Activated B cell treated with CpG ODN at 0.5 μM for 24 hours (primary cell): ENCODE measurements at regions of chr19 and their contacts with region 1.

Region 1: DNA sequence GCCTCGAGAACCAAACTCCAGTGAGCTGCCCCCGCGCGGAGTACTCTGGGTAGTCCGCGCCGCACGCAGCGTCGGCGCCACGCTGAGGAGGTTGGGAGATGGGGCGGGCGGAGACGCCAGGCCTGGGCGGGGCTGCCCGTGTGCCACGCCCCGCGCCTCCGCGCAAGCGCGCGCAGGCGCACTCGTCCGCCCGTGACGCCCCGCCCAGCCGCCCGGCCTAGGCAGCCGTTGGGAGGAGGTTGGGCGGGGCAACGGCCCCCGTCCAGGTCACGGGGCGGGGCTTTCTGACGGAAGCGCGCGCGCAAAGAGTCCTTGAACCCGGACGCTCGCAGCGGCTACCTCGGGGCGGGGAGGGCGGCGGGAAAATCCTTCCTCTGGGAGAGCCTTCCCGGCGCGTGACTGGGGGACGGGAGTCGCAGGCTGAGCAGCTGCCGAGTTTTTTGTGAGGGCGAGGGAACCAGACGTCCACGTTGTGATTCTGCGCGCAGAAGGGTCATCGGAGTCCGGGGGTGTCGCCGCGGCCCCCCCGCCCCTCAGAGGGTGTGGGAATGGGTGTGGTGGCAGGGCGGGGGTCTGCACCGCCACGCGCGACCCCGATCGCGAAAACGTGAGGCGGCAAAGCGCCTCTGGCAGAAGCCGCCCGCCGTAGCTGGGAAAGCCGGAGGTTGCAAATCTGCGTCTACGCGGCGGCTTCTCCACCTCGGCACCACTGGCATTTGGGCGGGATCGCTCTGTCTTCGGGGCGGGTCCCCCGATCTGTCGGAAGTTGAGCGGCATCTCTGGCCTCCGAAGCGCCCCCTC is at the start of gene MED26:
- DNase-seq: peak; percentile 93
- ATAC-seq: peak; percentile 94
- H3K4me3 Mint-ChIP-seq: peak within 1 kb of the TSS; percentile 98
- H3K27ac Mint-ChIP-seq: peak within 1 kb of the TSS; percentile 94
- H3K4me1 Mint-ChIP-seq: peaks cover 51% of the 10 kb centered on the region
- H3K27me3 Mint-ChIP-seq: no peaks in the 10 kb centered on the region
- CTCF ChIP-seq: no peak
- total RNA-seq, gene MED26: 32.0 and 36.1 TPM in 2 replicates

Region 2: DNA sequence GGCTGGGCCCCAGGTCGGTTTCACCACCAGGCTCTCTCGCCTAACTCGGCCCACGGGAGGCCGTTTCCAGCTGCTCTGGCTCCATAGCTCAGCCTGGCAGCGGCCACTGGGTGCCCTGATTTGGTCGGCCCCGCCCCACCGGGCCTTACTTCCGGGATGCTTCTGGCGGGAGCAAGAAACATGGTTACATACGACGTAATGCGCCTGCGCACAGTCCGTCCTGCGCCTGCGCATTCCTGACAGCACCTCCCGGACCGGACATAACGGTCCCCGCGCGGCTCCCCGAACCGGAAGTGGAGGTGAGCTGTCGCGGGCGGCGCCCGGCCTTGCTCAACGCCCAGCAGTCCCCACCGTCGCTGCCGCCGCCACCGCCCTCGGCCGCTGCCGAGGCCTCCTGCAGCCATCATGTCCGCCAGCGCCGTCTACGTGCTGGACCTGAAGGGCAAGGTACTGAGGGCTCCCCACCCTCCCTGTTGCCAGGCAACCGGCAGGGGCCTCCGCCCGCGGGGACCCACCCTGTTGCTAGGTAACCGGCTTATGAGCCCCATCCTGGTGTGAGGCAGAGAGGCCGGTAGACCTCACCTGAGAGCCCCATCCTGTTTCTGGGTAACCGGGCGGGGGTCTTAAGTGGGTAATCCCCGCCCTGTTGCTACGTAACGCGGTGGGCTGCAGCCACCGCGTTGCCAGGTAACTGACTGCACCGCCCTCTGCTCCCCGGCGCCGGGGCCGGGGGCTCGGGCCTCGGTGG is 430.6 kb before region 1 on chr19 and contains the start of gene AP1M1:
- CTCF ChIA-PET with region 1: no interaction called
- POLR2A ChIA-PET with region 1: no interaction called
- intact Hi-C with region 1: loop called (anchors 1 kb)
- DNase-seq: peak; percentile 99
- ATAC-seq: peak; percentile 88
- H3K4me3 Mint-ChIP-seq: peak within 1 kb of the TSS; percentile 83
- H3K27ac Mint-ChIP-seq: peak within 1 kb of the TSS; percentile 97
- H3K4me1 Mint-ChIP-seq: peaks cover 39% of the 10 kb centered on the region
- H3K27me3 Mint-ChIP-seq: no peaks in the 10 kb centered on the region
- CTCF ChIP-seq: no peak
- total RNA-seq, gene AP1M1: 82.6 and 87.5 TPM in 2 replicates

Region 3: DNA sequence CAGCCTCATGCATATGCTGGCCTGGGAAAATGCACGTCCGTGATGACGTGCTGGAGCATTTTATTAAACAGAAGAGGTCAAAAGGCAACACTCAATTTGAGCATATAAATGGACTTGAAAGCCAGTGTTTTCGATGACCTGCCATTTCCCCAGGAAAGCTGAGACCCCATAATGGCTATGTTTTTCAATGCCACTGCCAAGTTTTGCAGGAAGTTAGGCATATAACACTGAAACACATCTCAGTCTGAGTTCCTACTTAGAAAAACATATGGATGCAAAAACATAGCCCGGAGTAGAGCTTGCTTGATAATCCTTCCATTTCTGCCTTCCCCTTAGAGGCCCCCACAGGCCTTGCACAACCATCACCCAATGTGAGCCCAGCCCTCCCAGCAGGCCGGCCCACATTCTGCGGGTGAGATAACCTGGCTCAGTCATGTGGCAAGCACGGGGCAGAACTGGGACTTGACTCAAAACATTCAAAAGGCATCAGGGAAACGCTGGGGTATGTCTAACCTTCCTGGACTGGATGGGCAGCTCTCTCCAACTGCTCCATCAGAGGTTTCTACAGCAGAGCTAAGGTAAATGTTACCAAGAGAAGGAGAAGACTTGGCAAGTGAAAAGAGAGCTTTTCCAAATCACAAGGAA is 181.5 kb before region 1 on chr19:
- CTCF ChIA-PET with region 1: no interaction called
- POLR2A ChIA-PET with region 1: interaction called, 3 read pairs
- intact Hi-C with region 1: loop called (anchors 5 kb)
- DNase-seq: peak; percentile 52
- ATAC-seq: peak; percentile 43
- H3K4me3 Mint-ChIP-seq: peak overlapping the region; percentile 64
- H3K27ac Mint-ChIP-seq: peak overlapping the region; percentile 95
- H3K4me1 Mint-ChIP-seq: peaks cover 94% of the 10 kb centered on the region
- H3K27me3 Mint-ChIP-seq: no peaks in the 10 kb centered on the region
- CTCF ChIP-seq: no peak

Region 4: DNA sequence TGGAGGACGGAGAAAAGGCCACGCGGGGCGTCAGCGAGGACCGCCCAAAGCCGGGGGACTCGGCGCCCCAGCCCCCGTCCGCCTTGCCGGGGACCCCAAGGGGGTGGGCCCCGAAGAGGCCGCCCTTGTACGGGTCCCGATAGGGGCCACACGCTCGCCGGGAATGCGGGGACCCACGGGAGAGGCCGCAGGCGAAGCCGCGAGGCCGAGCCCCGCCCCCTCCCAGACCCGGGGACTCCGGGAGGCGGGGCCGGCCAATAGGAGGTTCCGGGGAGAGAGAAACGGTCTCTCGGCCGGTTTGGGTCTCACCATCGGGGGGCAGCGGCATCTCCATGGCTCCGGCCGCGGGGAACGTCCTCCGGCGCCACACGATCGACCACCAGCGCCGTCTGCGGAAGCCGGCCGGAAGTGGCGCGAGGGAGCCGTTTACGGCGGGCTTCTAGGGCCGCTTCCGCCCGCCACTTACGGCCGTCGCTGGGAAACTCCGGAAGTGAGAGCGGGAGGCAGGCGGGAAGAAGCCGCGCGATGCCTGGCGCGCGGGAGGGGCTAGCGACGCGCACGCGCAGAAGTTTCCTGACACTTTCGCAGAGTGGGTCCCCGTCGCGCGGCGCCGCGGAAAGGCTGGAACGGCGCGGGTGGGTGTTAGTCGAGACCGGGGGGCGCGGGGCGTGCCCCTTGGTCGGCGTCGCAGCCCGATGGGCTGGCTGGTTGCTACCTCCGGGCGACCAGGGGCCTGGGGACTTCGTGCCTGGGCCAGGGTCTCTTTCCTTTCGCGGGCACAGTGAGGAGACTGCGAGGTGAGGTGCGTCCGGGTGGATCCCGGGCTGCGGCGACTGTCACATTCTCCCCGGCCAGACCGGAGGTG is 86.1 kb before region 1 on chr19 and contains the start of gene CHERP:
- CTCF ChIA-PET with region 1: no interaction called
- POLR2A ChIA-PET with region 1: interaction called, 4 read pairs
- intact Hi-C with region 1: loop called (anchors 1 kb)
- DNase-seq: peak; percentile 93
- ATAC-seq: peak; percentile 82
- H3K4me3 Mint-ChIP-seq: peak within 1 kb of the TSS; percentile 86
- H3K27ac Mint-ChIP-seq: peak within 1 kb of the TSS; percentile 76
- H3K4me1 Mint-ChIP-seq: peaks cover 61% of the 10 kb centered on the region
- H3K27me3 Mint-ChIP-seq: no peaks in the 10 kb centered on the region
- CTCF ChIP-seq: no peak
- total RNA-seq, gene CHERP: 70.9 and 89.3 TPM in 2 replicates

Region 5: GRCh38 chr19:16572332-16573211 is 55.8 kb before region 1 on chr19 and contains the start of gene SLC35E1:
- CTCF ChIA-PET with region 1: interaction called, 3 read pairs
- POLR2A ChIA-PET with region 1: interaction called, 20 read pairs
- intact Hi-C with region 1: loop called (anchors 1 kb)
- DNase-seq: peak; percentile 88
- ATAC-seq: peak; percentile 93
- H3K4me3 Mint-ChIP-seq: peak within 1 kb of the TSS; percentile 94
- H3K27ac Mint-ChIP-seq: peak within 1 kb of the TSS; percentile 92
- H3K4me1 Mint-ChIP-seq: peaks cover 49% of the 10 kb centered on the region
- H3K27me3 Mint-ChIP-seq: no peaks in the 10 kb centered on the region
- CTCF ChIP-seq: no peak
- total RNA-seq, gene SLC35E1: 41.6 and 51.7 TPM in 2 replicates

Region 6: GRCh38 chr19:16608290-16608739 is 20.1 kb before region 1 on chr19:
- CTCF ChIA-PET with region 1: no interaction called
- POLR2A ChIA-PET with region 1: interaction called, 6 read pairs
- intact Hi-C with region 1: loop called (anchors 2 kb)
- DNase-seq: no peak
- ATAC-seq: no peak
- H3K4me3 Mint-ChIP-seq: no peak overlapping the region
- H3K27ac Mint-ChIP-seq: peak overlapping the region; percentile 64
- H3K4me1 Mint-ChIP-seq: peaks cover 83% of the 10 kb centered on the region
- H3K27me3 Mint-ChIP-seq: no peaks in the 10 kb centered on the region
- CTCF ChIP-seq: no peak

Region 7: GRCh38 chr19:16659831-16660708 is 31.7 kb after region 1 on chr19 and contains the start of gene SMIM7:
- CTCF ChIA-PET with region 1: interaction called, 3 read pairs
- POLR2A ChIA-PET with region 1: interaction called, 20 read pairs
- intact Hi-C with region 1: loop called (anchors 1 kb)
- DNase-seq: peak; percentile 96
- ATAC-seq: peak; percentile 96
- H3K4me3 Mint-ChIP-seq: peak within 1 kb of the TSS; percentile 97
- H3K27ac Mint-ChIP-seq: peak within 1 kb of the TSS; percentile 95
- H3K4me1 Mint-ChIP-seq: peaks cover 50% of the 10 kb centered on the region
- H3K27me3 Mint-ChIP-seq: no peaks in the 10 kb centered on the region
- CTCF ChIP-seq: no peak
- total RNA-seq, gene SMIM7: 90.2 and 110 TPM in 2 replicates

Region 8: GRCh38 chr19:17641181-17641580 is 1012.8 kb after region 1 on chr19:
- CTCF ChIA-PET with region 1: no interaction called
- POLR2A ChIA-PET with region 1: no interaction called
- intact Hi-C with region 1: no loop called
- DNase-seq: no peak
- ATAC-seq: no peak
- H3K4me3 Mint-ChIP-seq: no peak overlapping the region
- H3K27ac Mint-ChIP-seq: no peak overlapping the region
- H3K4me1 Mint-ChIP-seq: no peaks in the 10 kb centered on the region
- H3K27me3 Mint-ChIP-seq: peaks cover 24% of the 10 kb centered on the region
- CTCF ChIP-seq: no peak